IMR-90 (cell line): ENCODE measurements at regions of chr15 and their contacts with region 1.

Region 1: GRCh38 chr15:48358229-48358641 is 27.0 kb downstream of the DUT start:
- DNase-seq: peak; percentile 64
- ATAC-seq: peak; percentile 59
- H3K4me3 ChIP-seq: no peak overlapping the region
- H3K27ac ChIP-seq: 0 out of 2 replicates have a peak overlapping the region, but pooled peaks have one; percentile 40
- H3K4me1 ChIP-seq: peaks cover 15% of the 10 kb centered on the region
- H3K27me3 ChIP-seq: no peaks in the 10 kb centered on the region
- CTCF ChIP-seq: peak; percentile 75
- POLR2A ChIP-seq: no peak
- RAD21 ChIP-seq: peak; percentile 81

Region 2: DNA sequence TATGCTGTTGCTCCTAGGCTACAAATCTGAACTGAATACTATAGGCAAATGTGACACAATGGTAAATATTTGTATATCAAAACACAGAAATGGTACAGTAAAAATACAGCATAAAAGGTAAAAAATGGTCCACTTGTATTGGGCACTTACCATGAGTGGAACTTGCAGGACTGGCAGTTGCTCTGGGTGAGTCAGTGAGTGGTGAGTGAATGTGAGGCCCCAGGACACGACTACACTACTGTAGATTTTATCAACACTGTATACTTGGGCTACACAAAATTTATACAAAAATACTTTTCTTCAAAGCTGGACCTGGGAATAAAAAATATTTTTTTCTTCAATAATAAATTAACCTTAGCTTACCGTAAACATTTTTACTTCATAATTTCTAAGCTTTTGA is 68.6 kb before region 1 on chr15:
- CTCF ChIA-PET with region 1: no interaction called
- POLR2A ChIA-PET with region 1: no interaction called
- dilution Hi-C with region 1: no loop called
- in situ Hi-C with region 1: no loop called
- intact Hi-C with region 1: no loop called
- DNase-seq: peak; percentile 13
- ATAC-seq: no peak
- H3K4me3 ChIP-seq: no peak overlapping the region
- H3K27ac ChIP-seq: no peak overlapping the region
- H3K4me1 ChIP-seq: no peaks in the 10 kb centered on the region; the same call in 1 of the 2 replicates
- H3K27me3 ChIP-seq: no peaks in the 10 kb centered on the region
- CTCF ChIP-seq: no peak
- POLR2A ChIP-seq: no peak
- RAD21 ChIP-seq: no peak

Region 3: DNA sequence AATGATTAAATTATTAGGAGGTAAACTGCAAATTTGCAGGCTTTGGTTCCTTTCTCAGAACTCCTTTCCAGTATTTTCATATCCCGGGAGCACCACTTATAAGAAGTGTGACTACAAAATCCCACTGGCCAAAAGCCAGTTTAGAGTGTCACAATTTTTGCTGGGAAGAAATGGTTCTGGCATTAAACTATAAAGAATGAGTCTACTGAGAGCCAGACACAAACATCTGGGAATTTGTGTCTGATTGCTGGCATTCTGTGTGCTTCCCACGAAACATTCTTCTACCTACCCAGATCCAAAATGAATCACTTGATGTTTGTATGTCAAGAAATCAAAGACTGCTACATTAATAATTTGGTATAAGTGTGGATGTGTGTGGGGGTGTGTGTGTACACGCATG is 55.8 kb after region 1 on chr15:
- CTCF ChIA-PET with region 1: no interaction called
- POLR2A ChIA-PET with region 1: no interaction called
- dilution Hi-C with region 1: no loop called
- in situ Hi-C with region 1: loop called (anchors 5 kb)
- intact Hi-C with region 1: loop called (anchors 5 kb)
- DNase-seq: peak; percentile 68
- ATAC-seq: peak; percentile 33; the same call in 1 of the 2 replicates
- H3K4me3 ChIP-seq: no peak overlapping the region
- H3K27ac ChIP-seq: peak overlapping the region; percentile 14; the same call in 1 of the 2 replicates
- H3K4me1 ChIP-seq: peaks cover 5% of the 10 kb centered on the region
- H3K27me3 ChIP-seq: no peaks in the 10 kb centered on the region
- CTCF ChIP-seq: no peak
- POLR2A ChIP-seq: no peak
- RAD21 ChIP-seq: no peak

Region 4: DNA sequence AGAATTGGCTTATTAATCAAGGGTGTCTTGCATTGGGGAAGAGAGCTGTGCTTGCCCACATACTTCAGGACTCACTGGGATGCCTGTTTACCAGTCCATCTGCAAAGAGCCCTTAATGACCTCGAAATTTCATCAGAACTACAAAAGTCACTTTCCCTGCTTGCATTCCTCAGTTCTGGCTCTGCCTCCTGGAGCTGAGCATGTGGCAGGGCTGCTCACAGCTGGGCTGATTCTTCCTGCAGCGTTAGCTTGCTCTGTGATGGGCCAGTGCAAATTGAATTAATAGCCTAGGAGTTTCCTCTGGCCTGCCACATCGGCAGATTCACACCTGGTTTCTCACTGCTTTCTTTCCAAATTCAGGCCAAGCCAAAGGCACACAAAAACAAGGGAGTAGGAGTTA is 81.8 kb after region 1 on chr15:
- CTCF ChIA-PET with region 1: no interaction called
- POLR2A ChIA-PET with region 1: no interaction called
- dilution Hi-C with region 1: no loop called
- in situ Hi-C with region 1: no loop called
- intact Hi-C with region 1: loop called (anchors 5 kb)
- DNase-seq: peak; percentile 87
- ATAC-seq: peak; percentile 92
- H3K4me3 ChIP-seq: no peak overlapping the region
- H3K27ac ChIP-seq: peak overlapping the region; percentile 72; the same call in 1 of the 2 replicates
- H3K4me1 ChIP-seq: peaks cover 5% of the 10 kb centered on the region
- H3K27me3 ChIP-seq: no peaks in the 10 kb centered on the region
- CTCF ChIP-seq: no peak
- POLR2A ChIP-seq: no peak
- RAD21 ChIP-seq: no peak

Region 5: DNA sequence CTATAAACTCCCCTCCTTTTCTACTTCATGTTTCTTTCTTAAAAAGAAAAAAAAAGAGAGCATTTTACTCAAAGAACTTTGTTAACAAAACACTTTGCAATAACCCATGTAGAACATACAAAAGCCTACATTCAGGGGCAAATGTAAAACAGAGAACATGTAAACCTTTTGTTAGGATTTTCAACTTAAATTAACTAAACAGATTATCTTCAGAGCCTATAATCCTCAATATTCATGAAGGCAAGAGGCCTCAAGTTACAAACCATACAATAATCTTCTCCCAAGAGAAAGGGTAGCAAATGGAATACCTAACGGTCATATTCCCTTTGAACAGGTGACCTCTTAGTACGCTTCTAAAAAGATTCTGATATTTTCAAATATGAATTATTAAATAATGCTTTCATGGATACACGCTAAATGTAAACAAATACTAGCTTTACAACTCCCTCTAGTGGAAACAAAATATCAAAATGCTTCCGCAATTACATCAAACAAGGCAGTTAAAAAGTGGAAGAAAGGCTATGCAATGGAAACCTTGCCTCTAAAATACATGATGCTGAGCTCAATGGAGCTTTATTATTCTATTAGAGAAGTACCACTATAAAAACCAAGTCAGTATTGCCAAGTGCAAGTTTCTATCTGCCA is 442.7 kb after region 1 on chr15:
- CTCF ChIA-PET with region 1: no interaction called
- POLR2A ChIA-PET with region 1: no interaction called
- dilution Hi-C with region 1: no loop called
- in situ Hi-C with region 1: no loop called
- intact Hi-C with region 1: loop called (anchors 5 kb)
- DNase-seq: peak; percentile 43
- ATAC-seq: no peak
- H3K4me3 ChIP-seq: no peak overlapping the region
- H3K27ac ChIP-seq: no peak overlapping the region
- H3K4me1 ChIP-seq: peaks cover 5% of the 10 kb centered on the region
- H3K27me3 ChIP-seq: no peaks in the 10 kb centered on the region
- CTCF ChIP-seq: peak; percentile 51
- POLR2A ChIP-seq: no peak
- RAD21 ChIP-seq: peak; percentile 48; the same call in 1 of the 2 replicates

Region 6: GRCh38 chr15:48855501-48856440 is 497.5 kb after region 1 on chr15:
- CTCF ChIA-PET with region 1: interaction called, 3 read pairs
- POLR2A ChIA-PET with region 1: no interaction called
- dilution Hi-C with region 1: no loop called
- in situ Hi-C with region 1: no loop called
- intact Hi-C with region 1: loop called (anchors 1 kb)
- DNase-seq: peak; percentile 62
- ATAC-seq: peak; percentile 70
- H3K4me3 ChIP-seq: no peak overlapping the region
- H3K27ac ChIP-seq: no peak overlapping the region; the same call in 1 of the 2 replicates
- H3K4me1 ChIP-seq: peaks cover 14% of the 10 kb centered on the region
- H3K27me3 ChIP-seq: no peaks in the 10 kb centered on the region
- CTCF ChIP-seq: peak; percentile 56
- POLR2A ChIP-seq: no peak
- RAD21 ChIP-seq: peak; percentile 54; the same call in 1 of the 2 replicates